Panc1 (cell line): ENCODE measurements at regions of chr5 and their contacts with region 1.

Region 1: GRCh38 chr5:65209341-65209740 is 272.4 kb downstream of the ADAMTS6 start:
- DNase-seq: peak; percentile 51
- ATAC-seq: no peak
- H3K4me3 ChIP-seq: no peak overlapping the region
- H3K27ac ChIP-seq: no peak overlapping the region
- H3K4me1 ChIP-seq: no peaks in the 10 kb centered on the region
- H3K27me3 ChIP-seq: no peaks in the 10 kb centered on the region
- CTCF ChIP-seq: no peak

Region 2: DNA sequence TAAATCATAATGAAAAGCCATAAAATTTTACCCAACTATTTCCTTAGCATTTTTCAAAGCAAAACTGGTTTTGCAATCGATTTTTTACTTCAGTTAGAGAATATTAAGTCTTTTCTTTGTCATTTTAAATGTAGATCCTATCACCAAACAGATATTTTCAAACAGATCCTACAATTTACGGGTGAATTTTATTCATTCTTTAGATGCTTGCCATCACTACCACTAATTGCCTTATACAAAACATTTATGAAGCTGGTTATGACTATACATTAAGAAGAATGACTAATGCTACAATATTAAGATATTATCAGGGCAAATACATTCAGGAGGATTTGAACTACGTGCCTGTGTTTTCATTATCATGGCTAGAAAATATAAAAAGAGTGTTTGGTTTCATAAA is 243.7 kb before region 1 on chr5:
- CTCF ChIA-PET with region 1: no interaction called
- POLR2A ChIA-PET with region 1: no interaction called
- in situ Hi-C with region 1: no loop called
- intact Hi-C with region 1: loop called (anchors 10 kb)
- DNase-seq: no peak
- ATAC-seq: no peak
- H3K4me3 ChIP-seq: no peak overlapping the region
- H3K27ac ChIP-seq: no peak overlapping the region
- H3K4me1 ChIP-seq: no peaks in the 10 kb centered on the region
- H3K27me3 ChIP-seq: no peaks in the 10 kb centered on the region
- CTCF ChIP-seq: no peak